ENCODE measurements at regions of chr13 and their contacts with region 1.

Region 1: DNA sequence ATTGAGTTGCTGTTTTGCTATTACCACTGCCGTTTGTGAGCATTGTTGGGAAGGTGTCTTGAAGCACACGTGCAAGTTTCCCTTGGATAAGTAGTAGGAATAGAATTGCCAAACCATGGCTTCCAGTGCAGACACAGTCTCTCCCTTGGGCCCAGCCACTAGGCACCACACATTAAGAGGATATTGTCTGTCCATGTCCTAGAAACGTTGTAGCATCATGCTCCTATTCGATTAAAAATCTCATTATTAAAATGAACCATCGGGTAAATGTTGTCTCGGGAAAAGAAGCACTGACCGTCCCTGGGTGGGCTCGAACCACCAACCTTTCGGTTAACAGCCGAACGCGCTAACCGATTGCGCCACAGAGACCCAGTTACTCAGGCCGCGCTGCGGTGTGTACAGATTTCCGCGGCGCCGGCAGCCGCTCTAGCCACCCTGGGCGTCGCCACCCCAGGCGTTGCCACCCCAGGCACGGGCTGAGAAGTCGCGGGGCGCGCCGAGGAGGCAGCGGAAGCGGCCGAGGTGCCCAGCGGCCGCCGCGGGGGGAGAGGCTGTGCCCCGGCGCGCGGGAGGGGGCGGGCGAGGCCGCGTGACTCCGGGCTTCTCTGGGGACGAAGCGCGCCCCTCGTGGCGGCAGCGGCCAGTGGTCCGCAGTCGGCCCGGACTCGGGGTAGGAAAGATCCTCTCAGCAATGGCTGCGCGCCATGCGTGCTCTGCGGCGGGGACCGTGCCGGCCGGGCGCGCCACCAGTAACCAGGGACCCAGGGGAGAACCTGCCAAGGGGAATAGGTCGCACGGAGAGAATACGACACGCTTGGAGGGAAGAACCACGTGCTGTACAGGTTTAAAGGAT is 56.2 kb downstream of the USPL1 start:
- DNase-seq: peak; percentile 93
- H3K4me3 ChIP-seq: peak overlapping the region; percentile 26 to 60 (median 38)
- H3K27ac ChIP-seq: peak overlapping the region; percentile 67 to 85 (median 82)
- H3K4me1 ChIP-seq: peaks cover 0 to 7% (median 3%) of the 10 kb centered on the region in 4 donors
- H3K27me3 ChIP-seq: no peaks in the 10 kb centered on the region
- CTCF ChIP-seq: peak; percentile 49 to 73 (median 66)
- EP300 ChIP-seq: no peak
- POLR2A ChIP-seq: peak; percentile 15

Region 2: GRCh38 chr13:30257468-30258099 is 416.3 kb before region 1 on chr13:
- in situ Hi-C with region 1: no loop called
- intact Hi-C with region 1: no loop called
- DNase-seq: no peak
- H3K4me3 ChIP-seq: no peak overlapping the region
- H3K27ac ChIP-seq: peak overlapping the region in 3 of 4 donors; percentile 30 to 54 (median 34)
- H3K4me1 ChIP-seq: peaks cover 0 to 15% (median 4%) of the 10 kb centered on the region in 4 donors
- H3K27me3 ChIP-seq: no peaks in the 10 kb centered on the region
- CTCF ChIP-seq: no peak
- EP300 ChIP-seq: no peak
- POLR2A ChIP-seq: no peak

Region 3: GRCh38 chr13:30453727-30454126 is 220.2 kb before region 1 on chr13:
- in situ Hi-C with region 1: no loop called
- intact Hi-C with region 1: no loop called
- DNase-seq: no peak
- H3K4me3 ChIP-seq: no peak overlapping the region
- H3K27ac ChIP-seq: no peak overlapping the region
- H3K4me1 ChIP-seq: no peaks in the 10 kb centered on the region
- H3K27me3 ChIP-seq: no peaks in the 10 kb centered on the region
- CTCF ChIP-seq: peak in 2 of 5 experiments; percentile 12 to 15
- EP300 ChIP-seq: no peak
- POLR2A ChIP-seq: no peak

Region 4: GRCh38 chr13:30720172-30720869 is 46.4 kb after region 1 on chr13:
- in situ Hi-C with region 1: no loop called
- intact Hi-C with region 1: no loop called
- DNase-seq: no peak
- H3K4me3 ChIP-seq: no peak overlapping the region
- H3K27ac ChIP-seq: no peak overlapping the region
- H3K4me1 ChIP-seq: no peaks in the 10 kb centered on the region
- H3K27me3 ChIP-seq: no peaks in the 10 kb centered on the region
- CTCF ChIP-seq: no peak
- EP300 ChIP-seq: no peak
- POLR2A ChIP-seq: no peak

Region 5: DNA sequence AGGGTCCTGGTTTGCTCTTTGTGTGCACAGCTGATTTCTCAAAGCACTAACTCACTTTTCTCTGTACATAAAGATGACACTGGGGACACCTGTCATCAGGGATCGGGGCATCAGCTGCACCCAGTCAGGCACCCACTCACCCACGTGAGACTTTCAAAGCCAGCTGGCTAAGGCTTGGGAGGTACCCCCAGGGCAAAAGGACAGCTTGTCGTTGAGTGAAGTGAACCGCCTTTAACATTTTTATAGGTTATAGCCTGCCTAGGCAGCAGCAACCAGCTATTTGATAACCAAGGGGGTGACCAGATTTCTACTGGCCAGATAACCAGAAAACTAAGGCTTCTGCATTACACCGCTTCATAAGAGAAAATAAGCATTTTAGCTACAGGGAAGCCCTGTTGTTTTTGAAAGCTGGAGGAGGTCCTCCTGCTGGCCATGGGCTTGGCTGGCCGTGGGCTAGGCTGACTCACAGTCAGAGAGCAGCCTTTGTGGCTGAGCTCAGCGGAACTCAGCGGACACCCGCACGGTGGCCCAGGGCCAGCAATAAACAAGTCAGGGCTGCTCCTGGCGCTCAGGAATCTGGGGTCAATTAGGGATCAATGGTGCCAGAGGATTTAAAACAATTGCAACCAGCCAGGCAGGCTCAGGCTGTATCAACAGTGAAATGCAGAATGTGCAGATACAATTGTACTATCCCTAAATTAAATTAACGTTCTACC is 118.5 kb after region 1 on chr13:
- in situ Hi-C with region 1: loop called in 2 of 4 experiments (anchors 5 to 10 kb)
- intact Hi-C with region 1: loop called (anchors 10 kb)
- DNase-seq: peak; percentile 50
- H3K4me3 ChIP-seq: no peak overlapping the region
- H3K27ac ChIP-seq: peak overlapping the region; percentile 17 to 54 (median 43)
- H3K4me1 ChIP-seq: peaks cover 0 to 27% (median 8%) of the 10 kb centered on the region in 4 donors
- H3K27me3 ChIP-seq: no peaks in the 10 kb centered on the region
- CTCF ChIP-seq: peak in 2 of 5 experiments; percentile 9 to 13
- EP300 ChIP-seq: no peak
- POLR2A ChIP-seq: no peak

Region 6: DNA sequence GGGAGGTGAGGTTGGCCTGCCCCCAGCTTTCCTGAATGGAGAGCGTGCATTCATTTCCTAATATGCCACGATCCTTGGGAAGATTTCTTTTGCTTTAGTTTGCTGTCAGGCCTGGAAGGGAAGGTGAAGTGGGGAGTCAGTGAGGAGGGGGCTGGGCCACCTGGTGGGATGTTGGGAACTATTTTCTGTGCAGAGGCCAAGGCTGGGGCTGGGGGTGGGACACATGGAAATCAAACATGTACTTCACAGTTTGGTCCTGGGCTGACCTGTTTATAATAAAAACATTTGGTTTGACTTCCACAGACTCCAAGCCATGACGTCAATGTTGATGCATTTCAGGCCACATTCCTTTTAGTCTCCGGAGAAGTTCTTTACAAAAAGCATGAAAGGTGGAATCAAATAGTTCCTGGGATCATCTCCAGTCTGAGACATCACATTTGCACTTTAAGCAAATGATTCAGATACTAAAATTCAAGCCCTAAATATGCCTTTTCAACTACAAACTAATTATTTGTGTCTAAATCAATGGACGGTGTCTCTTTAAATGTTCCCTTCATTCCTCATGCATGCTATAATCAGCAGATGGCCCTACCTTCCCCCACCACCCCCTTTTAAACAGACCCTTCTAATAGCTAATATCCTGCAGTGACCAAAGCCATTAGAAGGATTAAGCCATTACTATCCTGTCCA is 190.7 kb after region 1 on chr13:
- in situ Hi-C with region 1: no loop called
- intact Hi-C with region 1: loop called (anchors 1 kb)
- DNase-seq: no peak
- H3K4me3 ChIP-seq: no peak overlapping the region
- H3K27ac ChIP-seq: peak overlapping the region; percentile 78 to 85 (median 83)
- H3K4me1 ChIP-seq: peaks cover 9 to 31% (median 14%) of the 10 kb centered on the region in 4 donors
- H3K27me3 ChIP-seq: no peaks in the 10 kb centered on the region
- CTCF ChIP-seq: no peak
- EP300 ChIP-seq: no peak
- POLR2A ChIP-seq: no peak

Measured in transverse colon (tissue), 4 donors.